ENCODE measurements at regions of chr7 and their contacts with region 1.

Region 1: DNA sequence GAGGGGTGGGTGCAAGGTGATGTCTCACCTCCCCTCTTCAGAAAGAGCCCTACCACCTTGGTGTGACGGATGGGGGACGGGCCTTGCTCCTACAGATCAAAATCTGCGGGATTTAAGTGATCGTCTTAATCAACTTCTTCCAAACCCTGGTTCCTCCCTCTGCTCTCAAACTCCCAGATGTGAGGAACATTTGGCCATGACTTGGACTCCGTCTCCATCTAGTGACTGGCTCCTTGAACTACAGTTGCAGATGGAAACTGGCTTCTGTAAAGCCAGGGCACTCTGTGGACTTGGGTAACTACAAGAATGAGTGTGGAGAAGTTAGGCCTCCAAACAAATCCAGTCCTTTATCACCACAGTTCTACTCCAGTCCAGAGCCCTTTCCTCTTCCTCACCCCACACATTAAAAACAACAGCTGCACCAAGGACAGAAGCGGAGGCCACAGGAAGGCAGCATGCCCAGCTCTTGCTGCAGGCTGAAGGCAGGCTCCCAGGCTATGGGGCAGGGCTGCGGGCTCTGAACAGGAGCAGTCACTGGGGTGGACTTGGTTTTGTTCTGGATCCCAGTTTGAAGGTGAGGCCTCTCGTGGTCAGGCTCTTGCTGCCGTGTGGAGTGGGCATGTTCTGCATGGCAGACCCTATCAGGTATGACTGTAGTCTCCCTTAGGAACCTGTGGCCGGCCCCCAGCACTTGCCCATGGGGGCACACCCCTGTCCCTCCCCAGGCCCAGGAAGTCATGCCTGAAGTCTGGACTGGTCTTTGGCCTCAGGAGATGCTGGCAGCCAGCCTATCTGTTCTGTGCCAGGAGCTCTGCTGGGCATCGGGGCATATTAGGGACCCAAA is 79.4 kb downstream of the VWC2 start:
- DNase-seq: no peak
- ATAC-seq: peak; percentile 69

Region 2: DNA sequence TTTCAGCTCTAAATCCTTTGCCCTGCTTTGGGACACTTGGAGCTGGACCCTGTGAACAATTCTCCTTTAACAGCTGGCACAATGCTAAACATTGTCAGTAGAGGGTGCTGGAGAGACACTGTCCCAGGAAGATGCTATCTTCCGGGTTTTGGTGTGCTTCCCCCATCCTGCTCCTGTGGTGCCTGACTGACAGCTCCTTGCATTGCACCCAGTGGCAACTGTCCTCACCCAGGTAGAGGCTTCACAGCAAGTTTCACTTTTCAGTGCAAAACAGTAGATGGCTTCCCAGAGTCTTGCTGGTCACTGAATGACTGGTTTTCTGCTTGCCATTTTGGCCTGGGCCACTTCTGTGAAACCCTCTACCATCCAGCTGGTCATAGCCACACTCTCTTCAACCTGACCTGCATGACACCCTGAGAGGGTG is 851.2 kb before region 1 on chr7:
- intact Hi-C with region 1: loop called (anchors 2 kb)
- DNase-seq: no peak
- ATAC-seq: no peak

Region 3: DNA sequence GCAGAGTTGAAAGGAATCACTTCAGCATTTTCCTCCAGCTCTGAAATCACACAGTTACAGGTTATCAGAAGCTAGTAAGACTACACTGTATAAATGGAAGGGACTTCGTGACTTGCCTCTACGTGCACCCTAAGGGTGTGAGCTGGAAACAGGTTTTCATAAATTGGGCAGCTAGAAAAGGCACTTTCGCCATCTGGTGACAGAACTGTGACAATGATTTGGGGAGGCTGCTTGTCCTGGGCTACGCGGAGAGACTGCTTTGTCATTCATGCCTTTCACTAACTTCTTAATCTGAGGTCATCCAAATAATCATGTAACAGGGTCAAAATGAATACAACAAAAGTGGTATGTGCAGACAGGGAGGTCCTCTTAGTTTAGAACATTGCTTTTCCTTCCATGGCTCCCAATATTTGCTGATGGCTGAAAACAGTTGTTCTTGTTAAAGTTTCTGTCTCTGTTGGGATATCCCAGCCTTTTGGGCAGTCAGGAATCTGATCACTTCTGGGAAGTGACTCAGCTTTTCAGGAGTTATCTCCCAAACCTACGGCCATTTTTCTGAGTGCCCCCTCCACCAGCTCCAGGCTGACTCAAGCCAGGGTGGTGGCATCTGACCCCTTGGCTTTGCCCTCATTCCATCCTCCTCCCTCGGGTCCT is 61.6 kb before region 1 on chr7:
- intact Hi-C with region 1: loop called (anchors 5 kb)
- DNase-seq: no peak
- ATAC-seq: peak; percentile 75

Measured in Right ventricle myocardium inferior (tissue), 1 donor.